Activated T-helper 2 cell treated with anti-CD3 and anti-CD28 coated beads, Interferon-gamma antibody, Interleukin-2, Interleukin-4, amounts not matched to agents 10 μg/mL and 5 μg/mL and 100 μg/mL, durations not matched to agents 14 hours and 24 hours and 36 hours (primary cell): ENCODE measurements at regions of chr11 and their contacts with region 1.

Region 1: GRCh38 chr11:95231127-95231880 is at the start of gene SESN3:
- DNase-seq: peak; percentile 99
- H3K4me3 Mint-ChIP-seq: peak within 1 kb of the TSS; percentile 92
- H3K27ac Mint-ChIP-seq: peak within 1 kb of the TSS; percentile 77
- H3K4me1 Mint-ChIP-seq: peaks cover 38% of the 10 kb centered on the region
- H3K27me3 Mint-ChIP-seq: peaks cover 4% of the 10 kb centered on the region
- total RNA-seq, gene SESN3: 73.2 and 74.9 TPM in 2 replicates

Region 2: DNA sequence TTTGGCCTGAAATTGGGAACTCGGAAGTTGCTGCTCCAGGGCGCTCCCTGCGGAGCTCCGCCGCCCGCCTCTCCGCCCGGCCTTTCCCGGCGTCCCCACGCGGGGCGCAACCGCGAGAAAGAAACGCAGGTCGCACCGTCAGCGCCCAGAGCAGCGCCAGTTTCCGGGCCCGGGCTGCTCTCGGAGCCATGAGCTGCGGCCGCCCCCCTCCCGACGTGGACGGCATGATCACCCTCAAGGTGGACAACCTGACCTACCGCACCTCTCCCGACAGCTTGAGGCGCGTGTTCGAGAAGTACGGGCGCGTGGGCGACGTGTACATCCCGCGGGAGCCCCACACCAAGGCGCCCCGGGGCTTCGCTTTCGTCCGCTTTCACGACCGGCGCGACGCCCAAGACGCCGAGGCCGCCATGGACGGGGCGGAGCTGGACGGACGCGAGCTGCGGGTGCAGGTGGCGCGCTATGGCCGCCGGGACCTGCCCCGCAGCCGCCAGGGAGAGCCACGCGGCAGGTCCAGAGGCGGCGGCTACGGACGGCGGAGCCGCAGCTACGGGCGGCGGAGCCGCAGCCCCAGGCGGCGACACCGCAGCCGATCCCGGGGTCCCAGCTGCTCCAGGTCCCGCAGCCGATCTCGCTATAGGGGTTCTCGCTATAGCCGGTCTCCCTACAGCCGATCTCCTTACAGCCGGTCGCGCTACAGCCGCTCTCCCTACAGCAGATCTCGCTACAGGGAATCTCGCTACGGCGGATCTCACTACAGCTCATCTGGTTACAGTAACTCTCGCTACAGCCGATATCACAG is 164.1 kb before region 1 on chr11:
- intact Hi-C with region 1: loop called (anchors 1 kb)
- DNase-seq: peak; percentile 70
- H3K4me3 Mint-ChIP-seq: peak overlapping the region; percentile 91
- H3K27ac Mint-ChIP-seq: peak overlapping the region; percentile 93
- H3K4me1 Mint-ChIP-seq: peaks cover 18% of the 10 kb centered on the region
- H3K27me3 Mint-ChIP-seq: peaks cover 16% of the 10 kb centered on the region

Region 3: DNA sequence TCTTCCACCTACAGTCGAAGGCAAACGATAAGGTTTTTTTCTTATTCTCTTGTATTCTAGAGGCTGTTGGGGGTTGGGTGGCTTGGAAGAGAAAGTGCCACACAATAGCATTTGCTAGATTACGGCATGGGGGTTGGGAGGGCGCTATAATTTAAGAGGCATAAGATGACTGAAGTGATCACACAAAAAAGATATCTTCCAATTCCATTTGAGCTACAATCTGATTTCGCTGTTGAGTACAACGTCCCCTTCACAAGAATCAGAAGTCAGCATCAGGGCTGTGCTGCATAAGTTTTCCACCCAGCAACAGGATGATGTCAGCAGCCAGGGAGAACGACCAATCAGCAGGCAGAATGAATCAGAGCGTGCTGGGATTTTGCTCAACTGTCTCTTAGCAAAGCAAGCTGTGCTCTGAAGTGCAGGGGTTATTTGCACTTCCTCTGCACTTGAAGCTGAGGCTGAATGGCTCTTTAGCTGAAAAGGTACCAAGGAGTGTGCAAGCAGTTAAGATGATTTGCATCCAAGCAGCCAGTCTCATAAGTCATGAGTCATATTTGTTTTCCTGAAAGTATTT is 22.9 kb after region 1 on chr11:
- intact Hi-C with region 1: loop called (anchors 1 kb)
- DNase-seq: peak; percentile 78
- H3K4me3 Mint-ChIP-seq: peak overlapping the region; percentile 68
- H3K27ac Mint-ChIP-seq: peak overlapping the region; percentile 77
- H3K4me1 Mint-ChIP-seq: peaks cover 39% of the 10 kb centered on the region
- H3K27me3 Mint-ChIP-seq: no peaks in the 10 kb centered on the region

Region 4: GRCh38 chr11:95345651-95346050 is 114.3 kb after region 1 on chr11:
- intact Hi-C with region 1: loop called (anchors 2 kb)
- DNase-seq: no peak
- H3K4me3 Mint-ChIP-seq: no peak overlapping the region
- H3K27ac Mint-ChIP-seq: peak overlapping the region; percentile 24
- H3K4me1 Mint-ChIP-seq: peaks cover 35% of the 10 kb centered on the region
- H3K27me3 Mint-ChIP-seq: peaks cover 4% of the 10 kb centered on the region

Region 5: DNA sequence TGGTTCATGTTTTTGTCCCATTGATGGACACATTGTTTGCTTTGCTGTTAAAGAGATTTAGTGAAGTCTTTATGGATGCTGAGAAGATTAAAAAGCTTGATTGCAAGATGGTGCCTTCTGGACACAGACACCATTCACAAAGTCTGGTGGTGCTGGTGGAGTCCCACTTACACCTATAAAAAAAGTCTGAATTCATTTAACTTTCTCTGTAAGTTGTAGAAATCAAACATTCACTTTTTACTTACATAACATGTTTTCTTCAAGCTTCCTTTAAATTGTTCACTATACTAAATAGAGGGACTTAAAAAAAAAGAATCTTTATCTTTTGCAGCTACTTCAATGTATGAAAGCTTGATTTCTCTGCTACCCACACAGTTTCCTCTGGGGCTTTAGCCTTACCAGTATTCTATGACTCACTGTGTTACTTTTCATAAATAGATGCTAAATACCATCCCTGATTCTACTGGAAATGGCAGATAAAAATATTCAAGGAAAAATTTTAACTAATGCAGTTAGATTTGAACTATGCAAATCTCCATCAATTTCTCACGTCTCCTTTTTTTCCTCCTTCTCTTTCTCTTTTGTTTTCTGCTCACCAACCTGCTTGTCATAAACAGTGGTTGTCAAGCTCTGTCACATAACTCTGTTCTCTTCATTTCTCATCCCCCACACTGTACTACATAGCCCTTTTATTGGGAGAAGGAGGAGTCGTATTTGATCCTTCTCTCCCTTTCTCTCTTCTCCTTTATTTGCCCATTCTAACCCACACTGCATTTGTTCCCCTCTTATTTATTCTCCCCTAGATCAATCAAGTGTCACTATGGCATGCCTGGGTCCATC is 468.5 kb after region 1 on chr11:
- intact Hi-C with region 1: loop called (anchors 1 kb)
- DNase-seq: no peak
- H3K4me3 Mint-ChIP-seq: peak overlapping the region; percentile 62
- H3K27ac Mint-ChIP-seq: peak overlapping the region; percentile 93
- H3K4me1 Mint-ChIP-seq: peaks cover 54% of the 10 kb centered on the region
- H3K27me3 Mint-ChIP-seq: no peaks in the 10 kb centered on the region

Region 6: GRCh38 chr11:96389720-96390487 is 1158.6 kb after region 1 on chr11 and contains the starts of genes CCDC82 and JRKL:
- intact Hi-C with region 1: loop called (anchors 5 kb)
- DNase-seq: peak; percentile 96
- H3K4me3 Mint-ChIP-seq: peak within 1 kb of the TSS; percentile 94
- H3K27ac Mint-ChIP-seq: peak within 1 kb of the TSS; percentile 86
- H3K4me1 Mint-ChIP-seq: peaks cover 50% of the 10 kb centered on the region
- H3K27me3 Mint-ChIP-seq: no peaks in the 10 kb centered on the region
- total RNA-seq, gene CCDC82: 35.4 and 38.6 TPM in 2 replicates
- total RNA-seq, gene JRKL: 11.8 and 12.9 TPM in 2 replicates